Dorsolateral prefrontal cortex (tissue), 120 donors: ENCODE measurements at regions of chr3 and their contacts with region 1.

Region 1: GRCh38 chr3:15108082-15108545 is 9.2 kb upstream of the RBSN start:
- DNase-seq: peak; percentile 60 to 88 (median 74)
- H3K4me3 ChIP-seq: peak overlapping the region in 10 of 59 donors; percentile 9 to 38 (median 23)
- H3K27ac ChIP-seq: no peak overlapping the region
- H3K27me3 ChIP-seq: no peaks in the 10 kb centered on the region
- CTCF ChIP-seq: peak; percentile 66 to 94 (median 88)

Region 2: DNA sequence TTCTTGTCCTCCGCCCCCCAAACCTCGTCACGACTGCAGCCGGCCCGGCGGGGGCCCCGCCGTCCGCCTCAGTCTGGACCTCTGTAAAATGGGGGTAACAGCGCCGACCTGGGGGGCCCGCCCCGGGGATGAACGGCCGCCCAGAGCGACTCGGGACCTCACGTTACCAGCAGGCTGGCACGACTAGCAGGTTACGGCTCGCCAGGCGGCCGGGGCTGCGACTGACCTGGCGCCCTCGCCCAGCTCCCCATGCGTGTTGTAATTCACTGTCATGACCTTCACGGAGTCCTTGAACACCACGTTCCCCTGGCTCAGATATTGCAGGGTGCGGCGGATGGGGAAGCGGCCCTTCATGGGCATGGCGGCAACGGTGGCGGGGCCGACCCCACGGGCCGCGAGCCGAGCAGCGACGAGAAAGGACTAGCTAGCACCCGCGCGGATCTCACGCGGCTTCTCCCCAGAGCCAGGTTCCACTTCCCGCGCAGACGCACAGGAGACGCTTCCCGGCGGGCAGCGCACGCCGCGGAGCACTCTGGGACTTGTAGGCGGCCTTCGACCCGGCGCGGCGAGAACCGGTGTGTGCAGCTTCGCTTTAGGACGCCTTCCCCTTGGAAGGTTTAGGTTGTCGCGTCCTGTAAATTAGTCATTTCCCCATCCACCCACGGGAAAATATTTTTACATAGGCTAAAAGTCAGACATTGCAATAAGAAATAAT is 43.1 kb before region 1 on chr3 and contains the start of gene MRPS25:
- intact Hi-C with region 1: no loop called
- DNase-seq: peak; percentile 77 to 92 (median 86)
- H3K4me3 ChIP-seq: peak within 1 kb of the TSS; percentile 69 to 100 (median 93)
- H3K27ac ChIP-seq: peak within 1 kb of the TSS in 56 of 59 donors; percentile 12 to 95 (median 80)
- H3K27me3 ChIP-seq: no peaks in the 10 kb centered on the region
- CTCF ChIP-seq: peak in 37 of 56 donors; percentile 10 to 51 (median 29)
- total RNA-seq, gene MRPS25: 54.3 to 115 (median 83.0) TPM

Region 3: GRCh38 chr3:15384510-15385237 is 276.6 kb after region 1 on chr3:
- intact Hi-C with region 1: loop called in 1 of 2 experiments (anchors 10 kb)
- DNase-seq: no peak
- H3K4me3 ChIP-seq: no peak overlapping the region
- H3K27ac ChIP-seq: peak overlapping the region in 2 of 59 donors; percentile 22 to 31
- H3K27me3 ChIP-seq: no peaks in the 10 kb centered on the region
- CTCF ChIP-seq: no peak

Region 4: DNA sequence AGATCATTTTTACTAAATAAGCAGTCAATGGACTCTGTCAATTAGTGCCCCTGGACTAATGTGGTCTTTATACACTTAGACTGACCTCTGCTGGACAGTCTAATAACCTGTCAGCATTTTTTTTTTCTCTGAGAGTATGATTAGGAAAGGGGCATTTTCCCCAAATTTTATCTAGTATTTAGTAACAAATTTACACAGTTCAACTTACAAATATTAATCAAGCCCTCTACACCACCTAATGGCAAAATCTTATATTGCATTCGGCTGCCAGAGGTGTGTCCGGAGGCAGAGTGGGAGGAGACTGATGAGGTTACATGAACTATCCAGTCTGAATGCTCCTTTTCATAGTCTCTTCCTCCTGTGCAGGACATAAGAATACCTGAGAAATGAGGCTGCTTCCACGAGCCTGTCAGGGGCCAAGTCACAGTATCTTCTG is 449.4 kb after region 1 on chr3:
- intact Hi-C with region 1: loop called (anchors 5 to 10 kb)
- DNase-seq: peak in 1 of 10 donors; percentile 11
- H3K4me3 ChIP-seq: no peak overlapping the region
- H3K27ac ChIP-seq: peak overlapping the region in 2 of 59 donors; percentile 4 to 10
- H3K27me3 ChIP-seq: no peaks in the 10 kb centered on the region
- CTCF ChIP-seq: peak; percentile 26 to 77 (median 61)